Activated CD4-positive, alpha-beta T cell treated with anti-CD3 and anti-CD28 coated beads for 36 hours (primary cell): ENCODE measurements at regions of chr10 and their contacts with region 1.

Region 1: DNA sequence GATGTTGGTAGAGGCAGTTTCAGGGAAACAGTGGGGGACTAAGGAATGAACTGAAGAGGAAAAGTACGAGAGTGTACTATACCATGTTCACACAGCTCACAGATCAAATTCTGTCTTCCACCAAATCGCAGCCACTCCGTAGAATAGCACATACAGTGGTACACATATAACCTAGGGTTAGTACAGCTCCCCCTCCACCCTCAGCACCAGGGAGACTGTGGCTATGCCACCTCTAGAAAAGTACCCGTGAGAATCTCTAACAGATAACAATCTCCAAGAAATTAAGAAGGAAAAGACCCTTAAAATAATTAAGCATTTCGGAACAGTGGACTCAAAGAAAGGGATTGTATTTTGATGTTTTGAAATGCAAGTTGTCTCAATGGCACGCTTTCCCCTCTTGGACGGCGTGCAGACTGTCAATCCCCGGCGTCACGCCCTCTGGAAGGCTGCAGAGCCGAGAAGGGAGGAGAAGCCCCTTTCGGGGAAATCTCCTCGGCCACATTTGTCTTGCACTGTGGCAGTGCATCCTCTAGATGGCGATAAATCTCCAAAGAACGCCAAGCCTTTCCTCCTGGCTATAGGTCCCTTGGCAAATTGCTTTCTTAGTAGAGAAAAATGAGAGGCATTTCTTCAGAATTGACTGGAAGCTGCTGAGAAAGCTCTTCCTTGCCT is 345.0 kb downstream of the REEP3 start:
- DNase-seq: peak; percentile 61
- ATAC-seq: peak; percentile 81
- H3K4me3 Mint-ChIP-seq: no peak overlapping the region
- H3K27ac Mint-ChIP-seq: no peak overlapping the region
- H3K4me1 Mint-ChIP-seq: peaks cover 7% of the 10 kb centered on the region
- H3K27me3 Mint-ChIP-seq: peaks cover 26% of the 10 kb centered on the region

Region 2: DNA sequence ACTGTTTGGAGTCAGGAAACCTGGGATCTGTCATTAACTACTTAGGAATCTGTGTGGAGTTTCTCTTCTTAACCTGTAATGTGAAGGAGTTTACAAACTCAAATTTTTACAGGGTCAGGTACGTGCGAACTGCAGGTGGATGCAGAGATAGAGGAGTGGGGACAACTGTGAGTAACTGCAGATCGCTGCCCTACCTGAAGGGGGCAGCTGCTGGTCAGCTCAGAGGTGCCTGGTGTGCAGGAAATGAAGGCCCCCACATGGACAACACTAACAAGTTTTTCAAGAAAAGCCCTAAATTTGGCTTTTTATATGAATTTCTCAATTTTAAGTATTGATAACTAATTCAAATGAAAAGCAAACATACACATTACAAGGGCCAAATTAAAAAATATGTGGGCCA is 35.0 kb after region 1 on chr10:
- CTCF ChIA-PET with region 1: interaction called, 16 read pairs
- POLR2A ChIA-PET with region 1: no interaction called
- intact Hi-C with region 1: no loop called
- DNase-seq: peak; percentile 6
- ATAC-seq: no peak
- H3K4me3 Mint-ChIP-seq: no peak overlapping the region
- H3K27ac Mint-ChIP-seq: no peak overlapping the region
- H3K4me1 Mint-ChIP-seq: no peaks in the 10 kb centered on the region
- H3K27me3 Mint-ChIP-seq: peaks cover 5% of the 10 kb centered on the region

Region 3: GRCh38 chr10:63976538-63976937 is 110.3 kb after region 1 on chr10:
- CTCF ChIA-PET with region 1: interaction called, 31 read pairs
- POLR2A ChIA-PET with region 1: no interaction called
- intact Hi-C with region 1: loop called (anchors 1 kb)
- DNase-seq: peak; percentile 70
- ATAC-seq: peak; percentile 81
- H3K4me3 Mint-ChIP-seq: no peak overlapping the region
- H3K27ac Mint-ChIP-seq: no peak overlapping the region
- H3K4me1 Mint-ChIP-seq: no peaks in the 10 kb centered on the region
- H3K27me3 Mint-ChIP-seq: peaks cover 3% of the 10 kb centered on the region